Tibial artery (tissue), 4 donors: ENCODE measurements at regions of chr16 and their contacts with region 1.

Region 1: DNA sequence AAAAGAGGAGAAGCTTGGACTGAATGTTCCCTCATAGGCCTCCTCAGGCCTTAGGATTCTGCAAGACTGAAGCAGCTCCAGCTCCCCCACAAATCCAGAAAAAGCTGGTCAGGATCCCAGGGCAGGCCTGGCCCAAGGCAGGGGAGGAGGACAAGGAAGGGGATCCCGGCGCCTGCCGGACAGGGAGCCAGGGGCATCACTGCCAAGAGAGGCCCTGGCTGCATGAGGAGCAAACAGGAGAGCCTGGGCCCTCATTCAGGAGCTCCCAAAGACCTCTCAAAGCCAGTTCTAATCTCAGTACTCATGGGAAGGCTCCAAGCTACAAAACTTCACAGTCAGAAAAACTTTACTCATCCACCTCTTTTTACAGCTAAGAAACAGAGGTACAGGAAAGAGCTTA is 67.3 kb downstream of the ZNF423 start:
- DNase-seq: peak in 1 of 2 donors; percentile 81
- H3K4me3 ChIP-seq: no peak overlapping the region
- H3K27ac ChIP-seq: peak overlapping the region; percentile 66 to 74
- H3K4me1 ChIP-seq: peaks cover 0 to 41% (median 28%) of the 10 kb centered on the region in 4 donors
- H3K27me3 ChIP-seq: no peaks in the 10 kb centered on the region
- CTCF ChIP-seq: no peak

Region 2: DNA sequence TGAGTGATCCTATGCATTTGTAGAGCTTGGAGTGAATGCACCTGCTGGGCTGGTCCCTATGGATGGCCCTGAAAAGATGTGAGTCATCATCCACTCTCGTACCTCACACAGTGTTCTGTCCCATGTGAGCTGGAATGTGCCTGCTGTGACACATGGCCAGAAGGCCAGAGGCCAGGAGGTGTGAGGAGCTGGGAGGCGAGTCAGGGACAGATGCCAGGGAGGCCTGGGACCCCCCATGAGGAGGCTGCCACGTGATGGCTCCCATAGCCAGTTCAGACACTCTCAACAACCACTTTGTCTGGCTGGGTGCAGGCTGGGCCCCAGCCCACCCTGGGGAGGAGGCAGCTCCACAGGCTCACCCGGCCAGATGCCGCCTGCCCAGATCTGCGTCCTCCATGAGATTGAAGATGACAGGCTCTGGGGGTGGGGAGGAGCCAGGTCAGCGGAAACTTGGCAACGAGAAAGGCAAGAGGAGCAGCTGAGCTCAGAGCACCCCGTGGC is 246.1 kb before region 1 on chr16:
- intact Hi-C with region 1: no loop called
- DNase-seq: no peak
- H3K4me3 ChIP-seq: no peak overlapping the region
- H3K27ac ChIP-seq: no peak overlapping the region
- H3K4me1 ChIP-seq: peaks cover 0 to 29% (median 21%) of the 10 kb centered on the region in 4 donors
- H3K27me3 ChIP-seq: no peaks in the 10 kb centered on the region
- CTCF ChIP-seq: no peak

Region 3: GRCh38 chr16:49834531-49835151 is 46.1 kb after region 1 on chr16:
- intact Hi-C with region 1: loop called (anchors 5 kb)
- DNase-seq: peak; percentile 83 to 97
- H3K4me3 ChIP-seq: peak overlapping the region in 1 of 2 donors; percentile 6
- H3K27ac ChIP-seq: peak overlapping the region; percentile 80 to 83
- H3K4me1 ChIP-seq: peaks cover 13 to 87% (median 64%) of the 10 kb centered on the region in 4 donors
- H3K27me3 ChIP-seq: peaks cover 0 to 6% of the 10 kb centered on the region in 2 donors
- CTCF ChIP-seq: no peak